Activated T-helper 2 cell treated with anti-CD3 and anti-CD28 coated beads, Interferon-gamma antibody, Interleukin-2, Interleukin-4, amounts not matched to agents 10 μg/mL and 5 μg/mL and 100 μg/mL, durations not matched to agents 14 hours and 24 hours and 36 hours (primary cell): ENCODE measurements at regions of chr7 and their contacts with region 1.

Region 1: DNA sequence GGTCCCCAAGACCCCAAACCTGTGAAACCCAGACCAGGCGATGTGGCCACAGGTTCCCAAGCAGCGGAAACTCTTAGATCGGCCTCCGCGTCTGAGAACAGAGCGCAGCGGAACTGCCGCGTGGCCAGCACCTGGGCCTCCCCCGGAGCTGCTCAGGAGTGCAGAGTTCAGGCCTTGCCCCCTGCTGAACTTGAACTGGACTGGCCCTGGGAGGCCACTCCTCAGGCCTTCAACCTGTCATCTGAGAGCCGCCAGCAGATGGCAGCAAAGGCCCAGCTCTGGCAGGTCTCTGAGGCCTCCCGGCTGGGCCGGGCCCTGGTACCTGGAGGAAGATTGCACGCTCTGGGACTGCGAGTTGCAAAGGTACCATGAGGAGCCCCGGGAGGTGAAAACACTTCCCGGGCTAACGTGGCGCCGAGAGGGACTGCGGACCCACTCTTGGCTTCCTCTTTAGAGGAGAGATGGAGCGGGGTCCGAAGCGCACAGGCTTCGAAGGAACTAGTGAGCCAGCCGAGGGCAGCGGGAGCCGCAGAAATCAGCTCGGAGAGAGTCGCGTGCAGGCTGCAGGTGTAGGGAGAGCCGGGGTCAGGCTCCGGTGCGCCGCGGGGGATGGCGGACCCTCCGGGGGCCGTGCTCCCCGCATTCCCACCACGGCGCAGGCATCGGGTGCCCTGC is 89.1 kb downstream of the PAXIP1 start:
- DNase-seq: peak; percentile 73
- H3K4me3 Mint-ChIP-seq: peak overlapping the region; percentile 52
- H3K27ac Mint-ChIP-seq: no peak overlapping the region
- H3K4me1 Mint-ChIP-seq: peaks cover 3% of the 10 kb centered on the region
- H3K27me3 Mint-ChIP-seq: peaks cover 9% of the 10 kb centered on the region

Region 2: DNA sequence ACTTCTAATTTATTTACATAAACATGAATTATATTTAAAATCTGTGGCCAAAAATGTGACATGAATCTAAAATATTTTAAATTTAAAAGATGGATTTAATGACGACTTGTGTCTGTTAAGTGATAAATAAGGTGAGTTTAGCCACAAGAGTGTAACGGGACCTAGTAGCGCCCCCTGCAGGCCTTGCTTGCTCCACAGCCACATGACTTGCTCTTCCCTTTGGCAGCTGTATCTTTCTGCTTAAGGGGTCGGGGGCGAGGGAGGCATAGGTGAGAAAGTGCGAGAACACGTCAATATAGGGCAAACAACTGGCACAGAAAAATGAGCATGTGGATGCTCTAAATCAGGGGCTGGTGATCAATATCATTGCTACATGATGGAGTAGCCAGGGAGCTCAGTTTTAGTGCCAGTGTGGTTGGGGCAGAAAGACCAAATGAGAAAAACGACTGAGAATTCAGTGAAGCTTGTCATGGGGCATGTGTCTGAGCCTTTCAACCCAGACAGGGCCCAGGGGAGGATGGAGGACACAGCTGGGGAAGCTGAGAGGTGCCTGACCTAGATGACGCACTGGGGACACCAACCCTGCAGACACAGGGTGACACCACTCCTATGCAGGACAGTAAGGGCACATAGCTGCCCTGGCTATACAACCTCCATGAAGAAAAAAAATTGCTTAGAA is 39.4 kb after region 1 on chr7:
- intact Hi-C with region 1: loop called (anchors 5 kb)
- DNase-seq: no peak
- H3K4me3 Mint-ChIP-seq: no peak overlapping the region
- H3K27ac Mint-ChIP-seq: no peak overlapping the region
- H3K4me1 Mint-ChIP-seq: no peaks in the 10 kb centered on the region
- H3K27me3 Mint-ChIP-seq: no peaks in the 10 kb centered on the region

Region 3: DNA sequence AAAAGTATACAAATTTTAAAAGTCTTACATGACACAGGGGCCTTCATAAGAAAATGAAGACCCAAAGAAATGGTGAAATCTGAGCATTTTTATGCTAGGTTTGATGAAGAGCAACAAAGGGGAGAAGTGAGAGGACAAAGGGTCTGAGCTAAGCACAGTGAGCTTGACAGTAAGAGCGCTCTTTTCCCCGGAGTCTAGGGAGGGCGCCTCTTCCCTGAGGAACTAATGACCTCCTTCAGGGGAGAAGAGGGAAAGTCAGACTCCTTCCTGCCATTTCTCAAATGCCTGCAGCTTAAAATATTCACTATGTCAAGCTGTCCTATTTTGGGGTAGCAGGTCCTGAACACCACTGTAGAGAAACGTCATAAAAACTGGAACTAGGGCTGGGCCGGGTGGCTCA is 107.2 kb after region 1 on chr7:
- intact Hi-C with region 1: no loop called
- DNase-seq: no peak
- H3K4me3 Mint-ChIP-seq: no peak overlapping the region
- H3K27ac Mint-ChIP-seq: no peak overlapping the region
- H3K4me1 Mint-ChIP-seq: no peaks in the 10 kb centered on the region
- H3K27me3 Mint-ChIP-seq: peaks cover 11% of the 10 kb centered on the region

Region 4: GRCh38 chr7:155053002-155053401 is 139.2 kb after region 1 on chr7:
- intact Hi-C with region 1: no loop called
- DNase-seq: no peak
- H3K4me3 Mint-ChIP-seq: no peak overlapping the region
- H3K27ac Mint-ChIP-seq: no peak overlapping the region
- H3K4me1 Mint-ChIP-seq: no peaks in the 10 kb centered on the region
- H3K27me3 Mint-ChIP-seq: peaks cover 8% of the 10 kb centered on the region

Region 5: GRCh38 chr7:155660059-155660757 is 746.4 kb after region 1 on chr7:
- intact Hi-C with region 1: no loop called
- DNase-seq: no peak
- H3K4me3 Mint-ChIP-seq: no peak overlapping the region
- H3K27ac Mint-ChIP-seq: peak overlapping the region; percentile 95
- H3K4me1 Mint-ChIP-seq: peaks cover 51% of the 10 kb centered on the region
- H3K27me3 Mint-ChIP-seq: no peaks in the 10 kb centered on the region